Common myeloid progenitor, CD34-positive (primary cell): ENCODE measurements at regions of chr5 and their contacts with region 1.

Region 1: DNA sequence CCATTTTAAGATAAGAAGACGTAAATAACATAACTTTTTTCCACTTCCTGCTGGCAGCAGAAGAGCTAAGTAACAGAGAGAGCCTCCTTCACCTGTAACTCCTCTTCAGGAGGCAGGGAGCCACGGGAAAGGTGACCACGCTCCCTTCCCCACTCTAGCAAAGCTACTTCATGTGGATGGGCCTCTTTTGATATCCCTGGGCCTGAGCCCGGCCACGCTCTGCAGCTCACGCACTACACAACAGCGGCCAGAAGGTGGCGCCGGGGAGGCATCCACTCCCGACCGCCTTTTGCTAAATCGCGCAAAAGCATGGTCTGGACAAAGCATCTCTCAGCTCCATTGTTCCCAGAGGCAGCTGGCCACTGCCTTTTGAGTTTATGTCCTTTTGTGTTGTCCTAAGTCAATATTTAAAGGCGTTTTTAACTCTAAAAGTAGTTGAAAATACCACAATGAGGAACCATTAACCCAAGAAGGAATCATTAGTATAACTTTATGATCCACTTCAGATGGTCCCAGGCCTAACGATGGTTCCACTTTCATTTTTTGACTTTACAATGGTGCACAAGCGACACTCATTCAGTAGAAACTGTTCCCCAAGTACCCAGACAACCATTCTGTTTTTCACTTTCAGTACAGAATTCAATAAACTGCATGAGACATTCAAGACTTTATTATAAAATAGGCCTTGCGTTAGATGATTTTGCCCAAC is 23.6 kb downstream of the CMBL start:
- DNase-seq: peak; percentile 66 to 80 (median 73)
- H3K4me3 ChIP-seq: no peak overlapping the region
- H3K27ac ChIP-seq: no peak overlapping the region
- H3K4me1 ChIP-seq: peaks cover 0 to 7% (median 2%) of the 10 kb centered on the region in 4 experiments
- H3K27me3 ChIP-seq: no peaks in the 10 kb centered on the region

Region 2: DNA sequence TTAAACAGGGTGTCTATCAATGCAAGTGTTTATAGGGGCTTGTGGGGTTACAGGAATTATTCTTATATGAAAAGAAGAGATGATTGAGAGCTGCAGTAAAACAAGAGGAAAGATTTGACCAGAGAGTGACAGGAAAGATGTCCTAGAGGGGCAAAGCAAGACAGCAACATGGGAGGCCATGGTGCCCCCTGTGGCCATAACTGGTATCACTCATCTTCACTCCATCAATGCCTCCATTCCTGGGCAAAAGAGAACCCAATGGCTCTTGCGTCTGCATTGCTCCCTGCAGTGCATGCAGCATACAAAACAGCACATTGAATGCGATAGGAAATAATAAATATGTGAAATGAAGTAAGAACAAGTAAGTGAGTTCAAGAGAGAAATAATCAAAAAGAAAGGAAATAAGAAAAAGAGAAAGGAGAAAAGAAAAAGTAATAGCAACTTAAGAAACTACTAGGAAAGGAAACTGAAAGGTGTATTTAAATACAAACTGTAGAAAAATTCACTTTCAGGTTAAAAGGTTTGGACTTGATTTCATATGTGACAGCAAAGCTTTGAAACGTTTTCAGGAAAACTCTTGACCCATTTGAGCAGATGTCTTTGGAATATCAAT is 944.8 kb before region 1 on chr5:
- CTCF ChIA-PET with region 1: no interaction called
- POLR2A ChIA-PET with region 1: no interaction called
- DNase-seq: peak in 1 of 3 donors; percentile 11
- H3K4me3 ChIP-seq: no peak overlapping the region
- H3K27ac ChIP-seq: no peak overlapping the region
- H3K4me1 ChIP-seq: no peaks in the 10 kb centered on the region
- H3K27me3 ChIP-seq: no peaks in the 10 kb centered on the region

Region 3: GRCh38 chr5:9932770-9933169 is 351.3 kb before region 1 on chr5:
- CTCF ChIA-PET with region 1: no interaction called
- POLR2A ChIA-PET with region 1: no interaction called
- DNase-seq: no peak
- H3K4me3 ChIP-seq: no peak overlapping the region
- H3K27ac ChIP-seq: no peak overlapping the region
- H3K4me1 ChIP-seq: no peaks in the 10 kb centered on the region
- H3K27me3 ChIP-seq: no peaks in the 10 kb centered on the region

Region 4: GRCh38 chr5:10064546-10065195 is 219.4 kb before region 1 on chr5:
- CTCF ChIA-PET with region 1: no interaction called
- POLR2A ChIA-PET with region 1: no interaction called
- DNase-seq: no peak
- H3K4me3 ChIP-seq: no peak overlapping the region
- H3K27ac ChIP-seq: no peak overlapping the region
- H3K4me1 ChIP-seq: no peaks in the 10 kb centered on the region
- H3K27me3 ChIP-seq: no peaks in the 10 kb centered on the region

Region 5: DNA sequence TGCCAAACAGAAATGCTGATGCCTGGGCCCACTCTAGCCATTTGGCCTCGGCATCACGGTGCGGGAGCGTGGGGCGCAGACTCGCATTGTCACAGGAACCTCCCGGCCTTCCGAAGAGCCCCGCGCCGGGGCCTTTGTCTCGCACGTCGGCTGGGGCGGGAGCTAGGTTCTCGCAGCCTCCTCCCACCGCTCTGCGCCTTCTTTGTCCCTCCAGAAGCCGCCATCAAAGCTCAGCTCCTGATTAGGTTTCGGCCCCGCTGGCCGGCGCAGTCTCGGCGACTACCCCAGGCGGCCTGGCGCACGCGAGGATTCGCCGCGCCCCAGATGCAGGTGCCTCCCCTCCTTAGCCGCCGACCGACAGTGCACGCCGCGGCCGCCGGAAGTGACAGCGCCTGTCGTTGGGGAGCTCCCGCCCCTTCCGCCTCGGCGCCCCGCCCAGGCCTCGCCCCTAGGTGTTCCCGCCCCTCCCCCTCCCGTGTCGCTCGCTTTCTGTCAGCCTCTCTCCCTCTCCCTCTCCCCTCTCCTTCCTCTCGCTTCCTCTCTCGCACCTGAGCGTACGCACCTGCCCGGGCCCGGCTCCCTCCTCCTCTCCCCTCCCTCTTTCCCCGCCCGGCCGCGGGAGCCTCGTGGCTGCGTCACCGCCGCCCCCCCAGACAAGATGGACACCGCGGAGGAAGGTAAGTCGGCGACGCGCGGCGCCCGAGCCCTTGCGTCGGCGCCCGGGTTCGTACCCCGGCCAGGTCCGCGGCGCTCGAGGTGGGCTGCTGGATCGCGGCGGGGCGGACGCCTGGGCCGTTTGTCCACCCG is 69.4 kb after region 1 on chr5 and contains the start of gene MARCHF6:
- CTCF ChIA-PET with region 1: interaction called, 20 read pairs
- POLR2A ChIA-PET with region 1: no interaction called
- DNase-seq: peak; percentile 93 to 96 (median 95)
- H3K4me3 ChIP-seq: peak within 1 kb of the TSS; percentile 84 to 100 (median 96)
- H3K27ac ChIP-seq: peak within 1 kb of the TSS; percentile 91 to 96
- H3K4me1 ChIP-seq: peaks cover 11 to 51% (median 36%) of the 10 kb centered on the region in 4 experiments
- H3K27me3 ChIP-seq: no peaks in the 10 kb centered on the region

Region 6: GRCh38 chr5:10364186-10364683 is 80.2 kb after region 1 on chr5:
- CTCF ChIA-PET with region 1: interaction called, 24 read pairs
- POLR2A ChIA-PET with region 1: no interaction called
- DNase-seq: peak; percentile 60 to 76 (median 68)
- H3K4me3 ChIP-seq: no peak overlapping the region
- H3K27ac ChIP-seq: no peak overlapping the region
- H3K4me1 ChIP-seq: peaks cover 3 to 25% (median 12%) of the 10 kb centered on the region in 4 experiments
- H3K27me3 ChIP-seq: no peaks in the 10 kb centered on the region

Region 7: DNA sequence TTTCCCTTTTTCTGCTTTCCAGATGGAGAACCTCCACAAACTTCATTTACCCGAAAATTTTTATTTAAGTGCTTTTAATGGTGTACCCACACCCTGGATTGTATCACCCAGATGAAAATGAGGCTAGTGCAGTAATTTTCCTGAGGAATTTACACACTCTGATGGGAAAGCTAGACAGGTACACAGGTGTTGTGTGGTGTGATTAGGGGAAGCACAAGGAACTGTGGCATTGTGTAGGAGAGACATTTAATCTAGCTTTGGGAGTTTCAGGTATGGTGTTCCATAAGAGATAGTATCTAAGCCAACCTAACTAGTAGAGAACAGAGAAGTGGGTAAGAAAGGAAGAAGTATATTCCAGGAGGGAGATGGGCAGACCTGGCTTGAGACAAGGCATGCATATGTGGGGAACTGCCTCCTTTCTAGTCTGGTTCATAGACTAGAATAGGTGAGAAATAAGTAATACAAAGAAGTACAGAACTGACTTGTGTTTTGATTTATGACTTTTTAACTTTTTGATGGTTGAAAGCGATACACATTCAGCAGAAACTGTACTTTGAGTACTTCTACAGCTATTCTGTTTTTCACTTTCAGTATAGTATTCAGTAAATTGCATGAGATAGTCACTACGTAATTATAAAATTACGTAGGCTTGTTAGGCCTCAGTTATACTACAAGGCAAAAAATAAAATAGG is 134.7 kb after region 1 on chr5:
- CTCF ChIA-PET with region 1: interaction called, 67 read pairs
- POLR2A ChIA-PET with region 1: no interaction called
- DNase-seq: no peak
- H3K4me3 ChIP-seq: no peak overlapping the region
- H3K27ac ChIP-seq: no peak overlapping the region
- H3K4me1 ChIP-seq: peaks cover 29 to 42% (median 38%) of the 10 kb centered on the region in 4 experiments
- H3K27me3 ChIP-seq: no peaks in the 10 kb centered on the region